ENCODE measurements at regions of chr22 and their contacts with region 1.

Region 1: DNA sequence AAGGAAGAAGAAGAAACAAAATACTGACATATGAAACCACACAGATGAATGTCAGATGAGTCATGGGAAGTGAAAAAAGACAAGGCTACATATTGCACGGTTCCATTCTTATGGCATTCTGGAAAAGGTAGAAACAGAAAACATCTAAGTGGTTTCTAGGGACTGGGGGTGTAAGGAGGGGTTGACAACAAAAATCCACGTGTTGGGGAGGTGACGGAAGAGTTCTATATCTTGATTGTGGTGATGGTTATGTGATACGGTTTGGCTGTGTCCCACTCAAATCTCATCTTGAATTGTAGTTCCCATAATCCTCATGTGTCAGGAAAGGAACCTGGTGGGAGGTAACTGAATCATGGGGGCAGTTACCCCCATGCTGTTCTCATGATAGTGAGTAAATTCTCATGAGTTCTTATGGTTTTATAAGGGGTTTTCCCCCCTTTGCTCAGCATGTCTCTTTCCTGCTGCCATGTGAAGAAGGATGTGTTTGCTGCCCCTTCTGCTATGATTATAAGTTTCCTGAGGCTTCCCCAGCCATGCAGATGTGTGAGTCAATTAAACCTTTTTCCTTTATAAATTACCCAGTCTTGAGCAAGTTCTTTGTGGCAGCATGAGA is 6.4 kb upstream of the ARFGAP3 start:
- DNase-seq: no peak
- H3K4me3 Mint-ChIP-seq: no peak overlapping the region
- H3K27ac Mint-ChIP-seq: peak overlapping the region; percentile 78
- H3K4me1 Mint-ChIP-seq: peaks cover 16% of the 10 kb centered on the region
- H3K27me3 Mint-ChIP-seq: no peaks in the 10 kb centered on the region

Region 2: DNA sequence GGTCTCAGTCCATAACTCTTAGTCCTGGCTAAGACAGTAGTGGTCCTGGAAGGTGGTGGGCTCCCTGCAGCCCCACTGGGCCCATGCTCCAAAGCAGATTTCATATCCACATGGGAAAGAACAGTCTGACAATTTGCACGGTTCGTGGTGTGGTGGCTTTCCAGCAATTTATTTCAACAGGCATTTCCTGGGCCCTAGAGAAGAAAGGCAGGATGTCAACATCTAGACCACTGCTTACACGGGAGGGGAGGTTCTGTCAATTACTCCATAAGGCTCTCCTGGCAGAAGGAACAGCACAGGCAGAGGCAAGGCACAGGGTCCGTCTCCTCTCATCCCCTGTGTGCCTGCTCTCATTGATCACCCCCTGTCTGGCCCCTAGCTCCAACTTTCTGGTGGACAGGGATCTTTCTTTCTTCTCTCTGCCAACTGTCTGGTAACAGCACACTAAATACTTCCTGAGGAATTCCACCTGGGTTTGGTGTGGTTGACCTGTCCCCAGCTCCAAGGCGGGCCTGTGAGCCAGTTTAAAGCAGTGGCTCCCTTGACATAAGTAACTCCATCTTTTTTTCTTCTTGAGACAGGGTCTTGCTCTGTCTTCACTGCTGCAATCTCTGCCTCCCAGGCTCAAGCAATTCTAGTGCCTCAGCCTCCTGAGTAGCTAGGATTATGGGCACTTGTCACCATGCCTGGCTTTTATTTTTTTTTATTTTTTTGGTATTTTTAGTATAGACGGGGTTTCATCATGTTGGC is 137.7 kb before region 1 on chr22:
- intact Hi-C with region 1: no loop called
- DNase-seq: no peak
- H3K4me3 Mint-ChIP-seq: no peak overlapping the region
- H3K27ac Mint-ChIP-seq: no peak overlapping the region
- H3K4me1 Mint-ChIP-seq: peaks cover 8% of the 10 kb centered on the region
- H3K27me3 Mint-ChIP-seq: peaks cover 25% of the 10 kb centered on the region

Region 3: GRCh38 chr22:42889304-42889703 is 25.8 kb after region 1 on chr22:
- intact Hi-C with region 1: loop called (anchors 1 kb)
- DNase-seq: no peak
- H3K4me3 Mint-ChIP-seq: peak overlapping the region; percentile 1
- H3K27ac Mint-ChIP-seq: peak overlapping the region; percentile 38
- H3K4me1 Mint-ChIP-seq: peaks cover 22% of the 10 kb centered on the region
- H3K27me3 Mint-ChIP-seq: no peaks in the 10 kb centered on the region